ENCODE measurements at regions of chr7 and their contacts with region 1.

Region 1: DNA sequence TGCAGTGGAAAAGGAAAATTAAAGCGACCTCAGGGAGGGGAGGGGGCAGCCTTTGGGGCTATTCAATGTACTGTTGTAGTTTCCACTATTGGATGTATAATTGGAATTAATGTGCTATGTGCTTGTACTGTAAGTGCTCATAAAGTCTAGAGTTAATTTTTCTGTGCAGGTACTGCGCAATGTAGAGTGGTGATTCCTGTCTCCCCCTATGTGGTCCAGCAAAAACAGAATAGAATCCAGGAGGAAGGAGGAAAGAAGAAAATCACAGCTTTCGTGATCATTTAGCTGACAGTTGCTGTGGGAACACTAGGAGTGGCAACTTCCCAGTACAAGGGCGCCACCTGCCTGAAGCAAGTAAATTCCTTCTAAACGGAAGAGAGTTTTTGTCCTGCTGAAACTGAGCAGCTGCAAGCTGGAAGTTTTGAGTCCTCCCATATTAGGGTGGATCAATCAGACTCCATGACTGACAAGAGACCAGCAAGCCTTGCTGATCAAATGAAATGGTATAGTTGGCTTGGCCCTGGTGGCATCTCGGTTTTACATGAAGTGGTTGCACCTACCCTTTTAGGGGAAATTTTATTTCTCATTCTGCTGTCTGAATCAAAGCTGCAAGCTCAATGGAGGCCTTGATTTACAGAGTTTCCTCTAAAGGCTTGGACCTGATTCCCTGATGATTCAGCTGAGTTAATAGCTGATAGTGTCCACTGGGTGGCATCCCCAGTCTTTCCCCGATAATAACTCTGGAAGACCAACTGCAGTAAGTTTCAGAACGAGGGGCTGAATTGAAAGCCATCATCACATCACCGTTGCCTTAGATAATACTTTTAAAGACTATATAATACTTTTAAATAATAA is 299.8 kb downstream of the HGF start:
- DNase-seq: peak; percentile 73
- ATAC-seq: peak; percentile 96
- H3K4me3 ChIP-seq: no peak overlapping the region
- H3K27ac ChIP-seq: no peak overlapping the region
- H3K4me1 ChIP-seq: peaks cover 0 to 9% of the 10 kb centered on the region in 2 experiments; a peak in 1 of 4 replicates
- H3K27me3 ChIP-seq: no peaks in the 10 kb centered on the region
- CTCF ChIP-seq: peak; percentile 58 to 79 (median 66); a peak in 5 of 6 replicates
- POLR2A ChIP-seq: no peak
- RAD21 ChIP-seq: peak; percentile 86

Region 2: GRCh38 chr7:81457852-81458522 is 12.1 kb before region 1 on chr7:
- CTCF ChIA-PET with region 1: interaction called, 14 read pairs
- POLR2A ChIA-PET with region 1: no interaction called
- RAD21 ChIA-PET with region 1: no interaction called
- intact Hi-C with region 1: no loop called
- DNase-seq: peak; percentile 13
- ATAC-seq: no peak
- H3K4me3 ChIP-seq: no peak overlapping the region
- H3K27ac ChIP-seq: no peak overlapping the region
- H3K4me1 ChIP-seq: no peaks in the 10 kb centered on the region
- H3K27me3 ChIP-seq: no peaks in the 10 kb centered on the region
- CTCF ChIP-seq: peak in 2 of 3 experiments; percentile 24 to 49; a peak in 4 of 6 replicates
- POLR2A ChIP-seq: no peak
- RAD21 ChIP-seq: peak; percentile 71

Region 3: GRCh38 chr7:81482600-81483186 is 12.6 kb after region 1 on chr7:
- CTCF ChIA-PET with region 1: interaction called, 14 read pairs
- POLR2A ChIA-PET with region 1: no interaction called
- RAD21 ChIA-PET with region 1: no interaction called
- intact Hi-C with region 1: no loop called
- DNase-seq: peak; percentile 23
- ATAC-seq: 0 out of 2 replicates have a peak, but pooled peaks have one; percentile 38
- H3K4me3 ChIP-seq: no peak overlapping the region
- H3K27ac ChIP-seq: no peak overlapping the region
- H3K4me1 ChIP-seq: no peaks in the 10 kb centered on the region
- H3K27me3 ChIP-seq: no peaks in the 10 kb centered on the region
- CTCF ChIP-seq: peak; percentile 31 to 54 (median 39); a peak in 4 of 6 replicates
- POLR2A ChIP-seq: no peak
- RAD21 ChIP-seq: peak; percentile 67

Measured in HCT116 (cell line).